ENCODE measurements at regions of chr2 and their contacts with region 1.

Region 1: GRCh38 chr2:112542123-112542983 is at the start of gene POLR1B:
- DNase-seq: peak; percentile 76
- ATAC-seq: peak; percentile 87
- H3K4me3 ChIP-seq: peak within 1 kb of the TSS; percentile 93
- H3K27ac ChIP-seq: peak within 1 kb of the TSS; percentile 65
- H3K4me1 ChIP-seq: peaks cover 5 to 15% of the 10 kb centered on the region in 2 experiments
- H3K27me3 ChIP-seq: no peaks in the 10 kb centered on the region
- CTCF ChIP-seq: no peak
- POLR2A ChIP-seq: peak; percentile 79
- RAD21 ChIP-seq: no peak
- total RNA-seq, gene POLR1B: 57.7 TPM

Region 2: DNA sequence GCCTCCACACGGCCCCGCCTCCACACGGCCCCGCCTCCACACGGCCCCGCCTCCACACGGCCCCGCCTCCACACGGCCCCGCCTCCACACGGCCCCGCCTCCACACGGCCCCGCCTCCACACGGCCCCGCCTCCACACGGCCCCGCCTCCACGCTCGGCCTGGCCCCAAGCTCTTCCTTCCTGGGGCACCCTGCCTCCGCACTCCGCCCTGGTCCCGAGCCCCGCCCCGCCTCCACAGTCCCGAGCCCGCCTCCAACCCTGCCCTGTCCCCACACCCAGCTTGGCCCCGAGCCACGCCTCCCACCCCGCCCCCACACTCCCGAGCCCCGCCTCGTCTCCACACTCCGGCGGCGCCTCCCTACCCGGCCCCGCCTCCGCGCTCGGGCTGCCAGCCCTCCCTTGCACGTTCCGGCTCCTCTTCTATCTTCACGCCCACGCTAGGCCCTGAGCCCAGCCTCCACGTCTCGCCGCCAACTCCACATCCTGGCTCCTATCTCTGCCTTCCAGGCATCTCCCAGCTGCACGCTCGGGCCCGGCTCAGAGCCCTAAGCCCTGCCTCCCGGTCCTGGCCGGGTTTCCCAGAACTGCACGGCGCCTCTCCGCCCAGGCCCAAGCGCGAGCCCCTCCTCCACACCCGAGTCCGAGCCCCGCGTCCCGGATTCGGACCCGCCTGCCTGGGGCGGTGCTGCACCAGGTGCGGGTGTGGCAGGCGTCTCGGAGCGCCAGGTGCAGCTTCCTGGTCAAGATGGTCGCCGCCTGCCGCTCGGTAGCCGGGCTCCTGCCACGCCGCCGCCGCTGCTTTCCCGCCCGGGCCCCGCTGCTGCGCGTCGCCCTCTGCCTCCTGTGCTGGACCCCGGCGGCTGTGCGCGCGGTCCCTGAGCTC is 487.3 kb before region 1 on chr2 and contains the start of gene TMEM87B:
- CTCF ChIA-PET with region 1: no interaction called
- POLR2A ChIA-PET with region 1: interaction called, 4 read pairs
- RAD21 ChIA-PET with region 1: no interaction called
- intact Hi-C with region 1: loop called (anchors 5 kb)
- DNase-seq: peak; percentile 87
- ATAC-seq: peak; percentile 74
- H3K4me3 ChIP-seq: peak within 1 kb of the TSS; percentile 62 to 89
- H3K27ac ChIP-seq: peak within 1 kb of the TSS; percentile 95
- H3K4me1 ChIP-seq: peaks cover 16 to 21% of the 10 kb centered on the region in 2 experiments
- H3K27me3 ChIP-seq: no peaks in the 10 kb centered on the region
- CTCF ChIP-seq: no peak
- POLR2A ChIP-seq: no peak
- RAD21 ChIP-seq: no peak
- total RNA-seq, gene TMEM87B: 14.8 TPM

Measured in HCT116 (cell line).